RWPE1 (cell line): ENCODE measurements at regions of chr6 and their contacts with region 1.

Region 1: DNA sequence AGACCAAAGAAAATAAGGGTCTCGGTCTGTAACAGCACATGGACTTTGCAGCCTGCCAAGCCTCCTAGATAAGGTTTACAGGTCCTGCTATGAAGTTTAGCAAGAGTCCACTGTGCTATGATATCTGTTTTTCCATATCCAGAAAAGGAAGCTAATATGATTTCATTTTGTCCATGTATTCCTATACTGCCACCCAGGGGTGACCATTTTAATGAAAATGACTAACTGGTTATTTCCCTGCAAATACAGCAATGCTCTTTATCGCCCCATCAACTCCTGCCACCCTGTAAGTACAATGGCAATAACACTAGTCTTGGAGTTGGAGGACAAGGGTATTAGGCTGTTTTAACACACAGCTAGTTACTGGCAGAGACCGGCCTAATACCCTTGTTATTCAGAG is 115.1 kb upstream of the GLP1R start:
- DNase-seq: peak; percentile 49
- H3K27ac ChIP-seq: no peak overlapping the region
- CTCF ChIP-seq: peak; percentile 44

Region 2: DNA sequence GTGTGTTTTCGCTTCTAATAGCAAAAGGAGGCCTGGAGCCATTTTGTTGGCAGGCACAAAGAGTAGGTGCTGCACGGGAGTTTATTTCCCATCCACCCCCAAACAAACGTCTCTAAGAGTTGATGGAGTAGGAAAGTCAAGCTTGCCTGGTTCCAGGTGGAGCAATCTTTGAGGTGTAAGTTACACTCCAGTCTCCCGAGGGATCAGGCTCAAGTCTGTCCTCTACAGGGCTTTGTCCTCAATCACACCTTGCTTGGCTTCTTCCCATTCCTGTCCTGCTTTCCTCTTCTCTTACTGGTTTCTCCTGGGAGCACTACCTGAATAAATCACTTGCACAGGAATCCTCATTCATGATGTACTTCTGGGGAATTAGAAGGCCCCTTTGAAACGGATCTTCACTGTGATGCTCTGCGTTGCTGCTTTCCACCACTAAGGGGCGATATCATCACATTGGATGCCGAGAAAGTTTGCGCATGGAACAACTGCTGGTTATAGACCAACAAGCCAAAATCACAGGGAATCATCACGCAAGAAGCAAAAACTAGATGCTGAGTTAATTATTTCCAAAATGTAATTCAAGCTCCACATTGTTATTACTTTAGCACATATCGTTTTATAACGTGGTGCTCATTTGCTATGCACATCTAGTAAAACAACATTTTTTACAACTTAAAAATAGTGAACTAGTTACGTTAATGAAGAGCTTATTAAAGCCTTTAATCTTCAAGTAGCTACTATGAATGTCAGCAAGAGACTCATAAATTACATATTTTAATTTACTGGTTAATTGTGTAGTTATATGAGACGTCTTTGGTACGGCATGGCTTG is 61.5 kb before region 1 on chr6:
- CTCF ChIA-PET with region 1: interaction called, 13 read pairs
- POLR2A ChIA-PET with region 1: no interaction called
- DNase-seq: peak; percentile 34
- H3K27ac ChIP-seq: no peak overlapping the region
- CTCF ChIP-seq: peak; percentile 87

Region 3: DNA sequence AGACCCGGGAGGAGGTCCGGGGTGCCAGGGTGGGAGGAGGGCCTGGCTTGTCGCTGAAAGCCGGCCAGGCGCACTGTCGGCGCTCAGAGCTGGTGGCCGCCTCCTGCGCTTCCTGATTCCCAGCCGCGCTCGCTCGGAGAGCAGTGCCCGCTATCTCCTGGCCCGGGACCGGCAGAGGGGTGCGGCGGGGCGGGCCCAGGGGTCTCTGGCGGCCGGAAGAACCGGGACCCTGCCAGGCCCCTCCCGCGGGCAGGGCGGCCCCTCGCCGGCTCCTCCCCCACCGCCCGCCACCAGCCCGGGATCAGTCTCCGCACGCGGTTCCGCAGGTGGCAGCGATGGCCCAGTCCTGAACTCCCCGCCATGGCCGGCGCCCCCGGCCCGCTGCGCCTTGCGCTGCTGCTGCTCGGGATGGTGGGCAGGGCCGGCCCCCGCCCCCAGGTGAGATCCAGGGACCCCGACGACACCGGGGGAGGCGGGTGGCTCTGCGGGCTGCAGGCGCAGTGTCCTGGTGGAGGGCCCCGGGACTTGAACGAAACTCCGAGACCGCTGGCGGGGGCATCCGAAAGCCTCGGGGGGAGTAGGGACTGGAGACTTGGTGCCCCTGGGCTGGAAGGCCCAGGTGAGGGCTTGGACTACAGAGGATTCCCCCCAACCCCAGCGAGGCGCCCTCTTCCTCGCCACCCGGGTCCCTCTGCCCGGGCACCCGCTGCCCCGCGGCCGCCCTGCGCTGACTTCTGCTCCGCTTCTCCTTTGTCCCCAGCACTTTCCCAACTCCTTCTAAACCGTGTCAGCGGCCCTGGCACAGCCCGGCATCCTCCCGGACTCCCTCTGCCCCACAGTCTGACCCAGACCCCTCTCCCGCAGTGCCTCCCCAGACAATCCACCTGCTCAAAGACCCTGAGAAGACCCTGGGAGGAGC is 115.3 kb after region 1 on chr6 and contains the start of gene GLP1R:
- CTCF ChIA-PET with region 1: no interaction called
- POLR2A ChIA-PET with region 1: no interaction called
- DNase-seq: no peak
- H3K27ac ChIP-seq: no peak within 1 kb of the TSS
- CTCF ChIP-seq: no peak